Activated B cell treated with CpG ODN at 0.5 μM for 24 hours (primary cell): ENCODE measurements at regions of chr1 and their contacts with region 1.

Region 1: GRCh38 chr1:246002725-246003441 is 504.2 kb downstream of the SMYD3 start:
- DNase-seq: peak; percentile 70
- ATAC-seq: peak; percentile 76
- H3K4me3 Mint-ChIP-seq: no peak overlapping the region
- H3K27ac Mint-ChIP-seq: no peak overlapping the region
- H3K4me1 Mint-ChIP-seq: peaks cover 7% of the 10 kb centered on the region
- H3K27me3 Mint-ChIP-seq: no peaks in the 10 kb centered on the region
- CTCF ChIP-seq: peak; percentile 80

Region 2: DNA sequence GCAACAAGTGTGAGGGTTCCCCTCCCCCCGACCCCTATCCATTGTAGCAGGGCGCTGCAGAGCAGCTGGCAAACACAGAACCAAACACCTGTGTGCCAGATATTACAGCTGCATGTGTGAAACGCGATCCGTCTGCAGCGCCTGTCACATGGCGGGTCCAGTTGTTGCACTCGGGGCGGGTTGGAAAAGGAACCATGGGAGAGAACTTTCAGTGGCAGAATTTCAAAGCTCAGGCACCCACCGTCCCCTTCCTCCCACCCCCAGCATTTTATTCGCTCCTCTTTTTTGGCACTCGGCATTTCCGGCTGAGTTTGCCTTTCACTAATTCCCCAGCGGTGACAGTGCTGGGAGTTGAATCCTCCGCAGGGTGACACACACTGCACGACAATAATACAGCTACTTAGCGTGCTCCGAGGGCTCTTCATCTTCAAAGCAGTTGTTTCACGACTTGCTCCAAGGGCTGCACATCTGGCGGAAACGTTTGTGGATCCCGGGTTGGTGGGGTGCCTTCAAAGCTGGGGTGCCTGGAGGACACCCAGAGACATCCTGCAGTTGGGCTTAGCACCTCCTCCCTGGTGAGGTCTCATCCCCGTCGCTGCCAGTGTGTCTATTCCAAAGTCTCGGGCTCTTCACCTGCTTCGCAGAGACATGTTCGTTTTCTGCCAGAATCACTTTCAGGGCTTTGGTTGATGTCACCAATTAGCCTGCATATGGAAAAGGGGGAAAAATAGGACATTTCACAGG is 1771.1 kb before region 1 on chr1:
- CTCF ChIA-PET with region 1: no interaction called
- POLR2A ChIA-PET with region 1: no interaction called
- intact Hi-C with region 1: no loop called
- DNase-seq: no peak
- ATAC-seq: no peak
- H3K4me3 Mint-ChIP-seq: no peak overlapping the region
- H3K27ac Mint-ChIP-seq: no peak overlapping the region
- H3K4me1 Mint-ChIP-seq: peaks cover 8% of the 10 kb centered on the region
- H3K27me3 Mint-ChIP-seq: peaks cover 2% of the 10 kb centered on the region
- CTCF ChIP-seq: no peak

Region 3: GRCh38 chr1:245079021-245079609 is 923.8 kb before region 1 on chr1:
- CTCF ChIA-PET with region 1: no interaction called
- POLR2A ChIA-PET with region 1: no interaction called
- intact Hi-C with region 1: loop called (anchors 1 kb)
- DNase-seq: no peak
- ATAC-seq: no peak
- H3K4me3 Mint-ChIP-seq: no peak overlapping the region
- H3K27ac Mint-ChIP-seq: no peak overlapping the region
- H3K4me1 Mint-ChIP-seq: no peaks in the 10 kb centered on the region
- H3K27me3 Mint-ChIP-seq: no peaks in the 10 kb centered on the region
- CTCF ChIP-seq: no peak

Region 4: DNA sequence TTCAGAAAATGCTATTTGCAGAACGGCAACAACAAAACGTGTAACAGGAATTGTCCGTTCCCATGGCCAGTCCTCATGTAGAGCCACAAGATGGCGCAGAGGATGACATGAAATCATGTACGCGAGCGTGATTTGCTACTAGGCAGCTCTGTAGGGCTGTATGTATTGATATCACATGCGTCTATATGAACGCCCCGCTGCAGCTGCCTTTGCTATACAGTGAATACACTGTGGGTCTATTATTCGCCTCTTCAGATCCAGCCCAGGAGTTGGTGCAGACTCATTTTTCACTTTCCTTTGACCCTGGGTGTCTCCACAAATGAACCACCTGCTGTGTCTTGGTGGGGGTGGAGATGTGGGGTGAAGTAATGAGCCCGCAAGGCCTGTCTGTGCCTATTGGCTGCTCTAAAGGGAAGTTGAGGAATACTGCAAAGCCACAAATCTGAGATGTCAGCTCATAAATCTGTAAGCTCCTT is 486.6 kb before region 1 on chr1:
- CTCF ChIA-PET with region 1: no interaction called
- POLR2A ChIA-PET with region 1: no interaction called
- intact Hi-C with region 1: loop called (anchors 1 kb)
- DNase-seq: no peak
- ATAC-seq: no peak
- H3K4me3 Mint-ChIP-seq: no peak overlapping the region
- H3K27ac Mint-ChIP-seq: no peak overlapping the region
- H3K4me1 Mint-ChIP-seq: peaks cover 1% of the 10 kb centered on the region
- H3K27me3 Mint-ChIP-seq: peaks cover 2% of the 10 kb centered on the region
- CTCF ChIP-seq: no peak

Region 5: GRCh38 chr1:245888809-245889208 is 114.1 kb before region 1 on chr1:
- CTCF ChIA-PET with region 1: interaction called, 8 read pairs
- POLR2A ChIA-PET with region 1: no interaction called
- intact Hi-C with region 1: loop called (anchors 1 kb)
- DNase-seq: no peak
- ATAC-seq: no peak
- H3K4me3 Mint-ChIP-seq: no peak overlapping the region
- H3K27ac Mint-ChIP-seq: no peak overlapping the region
- H3K4me1 Mint-ChIP-seq: no peaks in the 10 kb centered on the region
- H3K27me3 Mint-ChIP-seq: no peaks in the 10 kb centered on the region
- CTCF ChIP-seq: no peak

Region 6: GRCh38 chr1:246232126-246232525 is 229.2 kb after region 1 on chr1:
- CTCF ChIA-PET with region 1: no interaction called
- POLR2A ChIA-PET with region 1: no interaction called
- intact Hi-C with region 1: no loop called
- DNase-seq: no peak
- ATAC-seq: no peak
- H3K4me3 Mint-ChIP-seq: no peak overlapping the region
- H3K27ac Mint-ChIP-seq: no peak overlapping the region
- H3K4me1 Mint-ChIP-seq: no peaks in the 10 kb centered on the region
- H3K27me3 Mint-ChIP-seq: no peaks in the 10 kb centered on the region
- CTCF ChIP-seq: no peak